ENCODE measurements at regions of chr14 and their contacts with region 1.

Region 1: GRCh38 chr14:64681796-64682710 is 22.2 kb upstream of the PLEKHG3 start:
- DNase-seq: peak; percentile 71 to 77
- ATAC-seq: peak; percentile 70 to 94 (median 90)
- H3K4me3 ChIP-seq: no peak overlapping the region
- H3K27ac ChIP-seq: peak overlapping the region; percentile 45 to 86 (median 82)
- H3K4me1 ChIP-seq: peaks cover 8 to 49% (median 27%) of the 10 kb centered on the region in 9 donors
- H3K27me3 ChIP-seq: no peaks in the 10 kb centered on the region
- CTCF ChIP-seq: no peak

Region 2: DNA sequence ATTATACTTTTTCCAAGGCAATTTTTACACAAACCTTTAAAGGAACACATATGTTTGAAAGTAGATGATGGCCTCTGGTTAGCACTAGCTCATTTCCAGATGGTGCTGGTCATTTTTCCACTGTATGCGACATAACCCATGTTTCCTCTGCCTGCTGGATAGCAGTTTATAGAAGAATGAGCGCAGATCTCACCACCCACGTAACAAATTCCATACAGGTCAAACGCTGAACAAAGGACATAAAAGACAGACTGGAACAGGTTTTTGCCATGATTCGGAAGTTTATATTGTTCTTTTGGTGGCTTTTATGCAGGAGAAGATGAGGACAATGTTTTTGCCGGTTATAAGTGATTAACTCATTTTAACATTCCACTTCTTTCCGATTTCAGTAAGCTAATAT is 101.6 kb before region 1 on chr14:
- intact Hi-C with region 1: no loop called
- DNase-seq: no peak
- ATAC-seq: no peak
- H3K4me3 ChIP-seq: no peak overlapping the region
- H3K27ac ChIP-seq: no peak overlapping the region
- H3K4me1 ChIP-seq: peaks cover 0 to 6% (median 0%) of the 10 kb centered on the region in 9 donors
- H3K27me3 ChIP-seq: no peaks in the 10 kb centered on the region
- CTCF ChIP-seq: no peak

Region 3: GRCh38 chr14:64758691-64759584 is 76.9 kb after region 1 on chr14:
- intact Hi-C with region 1: loop called in 1 of 10 experiments (anchors 5 kb)
- DNase-seq: peak in 1 of 2 donors; percentile 60
- ATAC-seq: peak in 6 of 8 donors; percentile 25 to 57 (median 50)
- H3K4me3 ChIP-seq: no peak overlapping the region
- H3K27ac ChIP-seq: peak overlapping the region in 9 of 10 donors; percentile 16 to 88 (median 76)
- H3K4me1 ChIP-seq: peaks cover 45 to 88% (median 68%) of the 10 kb centered on the region in 9 donors
- H3K27me3 ChIP-seq: no peaks in the 10 kb centered on the region
- CTCF ChIP-seq: no peak

Measured in heart right ventricle (tissue), 16 donors.